HAP-1 (cell line): ENCODE measurements at regions of chr2 and their contacts with region 1.

Region 1: DNA sequence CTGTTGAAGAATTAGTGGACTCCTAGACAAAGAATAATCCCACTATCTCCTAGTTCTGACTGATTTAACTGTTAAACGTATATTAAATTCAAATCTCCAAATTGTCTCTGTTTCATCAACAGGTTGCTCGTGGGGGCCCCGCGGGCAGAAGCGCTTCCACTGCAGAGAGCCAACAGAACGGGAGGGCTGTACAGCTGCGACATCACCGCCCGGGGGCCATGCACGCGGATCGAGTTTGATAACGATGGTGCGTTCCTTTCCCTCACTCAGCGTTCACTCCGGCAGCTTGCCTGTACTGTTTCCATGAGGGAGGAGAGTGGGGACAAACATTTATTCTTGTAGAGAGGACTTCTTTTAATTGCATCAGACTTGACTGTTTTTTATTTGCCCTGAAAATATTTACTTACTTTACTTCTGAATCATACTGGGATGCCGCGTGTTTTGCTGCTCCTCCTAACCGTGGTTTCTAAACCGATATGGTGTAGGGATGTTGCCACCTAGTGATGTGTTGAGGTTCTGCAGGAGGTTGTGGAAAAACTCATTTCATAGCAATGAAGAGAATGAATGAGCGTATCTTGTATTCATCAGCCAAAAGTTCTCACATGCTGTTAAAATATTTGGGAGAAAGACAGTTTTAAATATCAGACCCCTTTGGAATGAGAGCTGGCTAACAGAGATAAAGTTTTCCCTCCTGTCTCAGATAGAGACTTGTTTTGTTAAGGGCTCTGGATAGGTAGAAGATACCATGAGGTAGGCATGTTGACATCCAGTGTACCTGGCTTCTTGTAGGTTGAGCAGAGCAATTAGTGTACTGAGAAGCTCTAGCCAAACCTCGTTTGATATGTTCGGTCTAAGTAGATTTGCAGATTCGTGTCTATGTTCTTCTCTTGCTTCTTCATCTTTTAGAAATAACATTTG is 38.3 kb downstream of the ITGA6 start:
- DNase-seq: peak; percentile 61 to 80
- H3K4me3 ChIP-seq: peak overlapping the region; percentile 9; the same call in 1 of the 2 replicates
- H3K4me1 ChIP-seq: peaks cover 19% of the 10 kb centered on the region
- H3K27me3 ChIP-seq: no peaks in the 10 kb centered on the region

Region 2: GRCh38 chr2:171574149-171574795 is 891.4 kb before region 1 on chr2:
- in situ Hi-C with region 1: loop called (anchors 25 kb)
- DNase-seq: peak; percentile 59 to 87
- H3K4me3 ChIP-seq: no peak overlapping the region
- H3K4me1 ChIP-seq: no peaks in the 10 kb centered on the region
- H3K27me3 ChIP-seq: 0 out of 2 replicates have a peak, but pooled peaks cover 3% of the 10 kb centered on the region

Region 3: DNA sequence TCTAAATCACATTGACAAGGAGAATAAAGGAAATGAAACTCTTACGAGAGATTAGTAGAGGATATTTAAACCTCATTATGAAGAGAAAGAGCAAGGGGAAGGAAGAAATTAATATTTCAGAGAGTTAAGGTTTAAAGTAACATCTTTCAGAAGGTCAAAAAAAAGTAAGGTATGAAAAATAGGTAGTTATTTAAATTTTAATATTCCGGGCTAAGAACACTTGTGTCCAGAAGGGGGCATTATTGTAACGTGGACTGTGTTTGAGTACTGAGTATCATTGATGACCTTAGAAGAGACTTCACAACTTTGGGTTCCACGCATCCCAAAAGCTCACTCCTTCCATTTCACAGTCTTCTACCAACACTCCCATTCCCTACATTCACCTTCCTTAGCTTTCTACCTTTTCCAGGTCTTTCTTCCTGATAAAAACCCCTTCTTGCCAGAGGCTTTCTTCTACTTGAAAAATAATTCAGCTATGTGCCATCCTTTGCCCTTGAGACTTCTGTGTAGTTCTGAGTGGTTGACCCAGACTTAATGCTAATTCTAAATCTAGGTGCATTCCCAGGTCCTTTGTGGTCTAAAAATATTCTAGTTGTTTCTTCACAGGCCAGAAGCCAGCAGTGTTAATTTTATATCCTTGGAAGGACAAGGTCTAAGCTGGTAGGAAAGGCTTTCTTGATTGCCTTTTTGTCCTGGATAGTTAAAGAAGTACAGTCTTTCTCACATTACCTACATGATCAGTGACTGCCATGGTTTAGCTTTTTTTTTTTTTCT is 761.9 kb before region 1 on chr2:
- in situ Hi-C with region 1: loop called (anchors 25 kb)
- DNase-seq: peak in 1 of 2 experiments; percentile 48
- H3K4me3 ChIP-seq: no peak overlapping the region
- H3K4me1 ChIP-seq: peaks cover 13% of the 10 kb centered on the region
- H3K27me3 ChIP-seq: no peaks in the 10 kb centered on the region

Region 4: DNA sequence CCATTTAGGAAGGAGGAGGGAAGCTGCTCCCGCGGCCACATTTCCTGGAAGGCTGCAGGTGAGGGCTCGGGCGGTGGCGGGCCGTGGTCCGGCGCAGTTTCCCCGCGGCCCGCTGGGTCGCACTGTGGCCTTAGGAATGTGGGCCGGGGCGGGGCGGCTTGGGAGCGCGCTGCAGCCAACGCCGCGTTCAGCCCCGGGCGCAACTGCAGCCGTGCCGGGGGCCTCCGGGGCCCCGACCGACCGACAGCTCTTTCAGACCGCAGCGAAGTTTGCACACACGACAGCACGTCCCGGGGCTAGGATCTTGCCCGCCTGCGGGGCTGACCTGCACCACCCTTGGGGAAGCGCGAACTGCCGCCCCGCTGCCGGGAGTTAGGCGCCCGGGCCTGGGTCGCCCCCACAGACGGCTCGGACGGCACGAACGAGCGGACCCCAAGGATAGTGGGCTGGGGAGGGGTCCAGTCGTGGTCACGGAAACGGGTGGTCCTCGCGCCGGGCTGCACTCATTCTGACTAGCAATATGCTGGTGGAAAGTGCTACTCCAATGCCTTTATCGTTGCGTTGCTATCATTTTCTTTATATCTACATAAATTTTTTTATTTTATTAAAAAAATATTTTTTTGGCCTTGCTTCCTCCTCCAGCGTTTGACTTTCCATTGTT is 293.0 kb before region 1 on chr2:
- in situ Hi-C with region 1: loop called (anchors 5 kb)
- DNase-seq: peak; percentile 58 to 88
- H3K4me3 ChIP-seq: peak overlapping the region; percentile 44
- H3K4me1 ChIP-seq: peaks cover 4% of the 10 kb centered on the region; the same call in 1 of the 2 replicates
- H3K27me3 ChIP-seq: no peaks in the 10 kb centered on the region

Region 5: DNA sequence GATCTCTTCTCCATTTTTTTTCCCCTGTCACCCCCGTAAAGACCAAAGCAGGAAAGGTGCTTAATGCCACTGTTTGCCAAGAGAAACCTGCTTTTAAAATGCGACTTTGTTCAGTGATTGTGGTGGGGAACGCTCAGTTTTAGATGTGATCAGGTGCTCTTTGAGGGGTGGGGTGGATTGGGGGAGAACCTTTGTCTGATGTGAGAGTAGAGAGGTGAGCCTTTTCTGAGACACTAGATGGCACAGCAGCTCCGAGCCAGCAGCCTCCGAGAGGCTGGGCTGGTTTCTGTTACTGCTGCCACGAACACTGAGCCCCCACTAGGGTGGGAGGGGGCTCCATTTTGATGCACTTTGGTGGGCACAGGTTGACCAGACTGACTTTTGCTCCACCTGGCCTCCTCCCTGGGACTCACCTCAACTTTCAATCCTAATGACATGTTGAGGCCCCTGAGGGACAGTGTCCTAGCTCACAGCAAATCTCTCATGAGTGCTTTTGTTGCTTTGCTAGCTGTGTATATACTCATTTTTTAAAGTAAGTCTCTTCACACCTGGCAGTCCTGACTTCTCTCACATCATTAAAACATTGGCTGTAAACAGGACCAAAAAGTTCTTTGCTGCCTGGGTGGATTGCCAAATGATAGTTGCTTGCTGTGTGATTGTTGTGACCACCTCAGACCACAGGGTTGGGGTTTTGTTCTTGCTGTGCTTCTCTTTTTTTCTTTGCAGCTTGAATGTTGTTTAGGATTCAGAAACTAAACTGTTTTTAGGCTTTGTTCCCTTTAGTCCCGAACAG is 511.8 kb after region 1 on chr2:
- in situ Hi-C with region 1: no loop called
- DNase-seq: no peak
- H3K4me3 ChIP-seq: no peak overlapping the region
- H3K4me1 ChIP-seq: peaks cover under 1% of the 10 kb centered on the region; the same call in 1 of the 2 replicates
- H3K27me3 ChIP-seq: no peaks in the 10 kb centered on the region